Activated CD4-positive, alpha-beta T cell treated with anti-CD3 and anti-CD28 coated beads for 36 hours (primary cell): ENCODE measurements at regions of chr10 and their contacts with region 1.

Region 1: DNA sequence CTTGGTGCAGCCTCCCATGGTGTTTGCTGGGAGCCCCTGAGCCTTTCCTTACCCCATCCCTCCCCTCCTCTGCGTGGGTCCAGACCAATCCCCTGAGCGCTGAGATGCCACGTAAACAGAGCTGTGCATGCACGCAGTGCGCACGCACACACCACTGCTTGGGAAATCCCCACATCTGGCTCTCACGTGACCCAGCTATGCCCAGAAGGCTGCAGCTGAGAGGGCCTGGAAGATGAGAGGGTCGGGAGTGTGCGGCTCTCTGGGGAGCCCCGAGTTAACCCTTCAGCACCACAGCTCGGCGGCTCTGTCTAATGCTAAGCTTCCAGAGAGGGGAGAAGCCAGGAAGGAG is 177.2 kb downstream of the SH3PXD2A start:
- DNase-seq: peak; percentile 91
- ATAC-seq: peak; percentile 99
- H3K4me3 Mint-ChIP-seq: peak overlapping the region; percentile 72
- H3K27ac Mint-ChIP-seq: peak overlapping the region; percentile 90
- H3K4me1 Mint-ChIP-seq: peaks cover 20% of the 10 kb centered on the region
- H3K27me3 Mint-ChIP-seq: no peaks in the 10 kb centered on the region

Region 2: DNA sequence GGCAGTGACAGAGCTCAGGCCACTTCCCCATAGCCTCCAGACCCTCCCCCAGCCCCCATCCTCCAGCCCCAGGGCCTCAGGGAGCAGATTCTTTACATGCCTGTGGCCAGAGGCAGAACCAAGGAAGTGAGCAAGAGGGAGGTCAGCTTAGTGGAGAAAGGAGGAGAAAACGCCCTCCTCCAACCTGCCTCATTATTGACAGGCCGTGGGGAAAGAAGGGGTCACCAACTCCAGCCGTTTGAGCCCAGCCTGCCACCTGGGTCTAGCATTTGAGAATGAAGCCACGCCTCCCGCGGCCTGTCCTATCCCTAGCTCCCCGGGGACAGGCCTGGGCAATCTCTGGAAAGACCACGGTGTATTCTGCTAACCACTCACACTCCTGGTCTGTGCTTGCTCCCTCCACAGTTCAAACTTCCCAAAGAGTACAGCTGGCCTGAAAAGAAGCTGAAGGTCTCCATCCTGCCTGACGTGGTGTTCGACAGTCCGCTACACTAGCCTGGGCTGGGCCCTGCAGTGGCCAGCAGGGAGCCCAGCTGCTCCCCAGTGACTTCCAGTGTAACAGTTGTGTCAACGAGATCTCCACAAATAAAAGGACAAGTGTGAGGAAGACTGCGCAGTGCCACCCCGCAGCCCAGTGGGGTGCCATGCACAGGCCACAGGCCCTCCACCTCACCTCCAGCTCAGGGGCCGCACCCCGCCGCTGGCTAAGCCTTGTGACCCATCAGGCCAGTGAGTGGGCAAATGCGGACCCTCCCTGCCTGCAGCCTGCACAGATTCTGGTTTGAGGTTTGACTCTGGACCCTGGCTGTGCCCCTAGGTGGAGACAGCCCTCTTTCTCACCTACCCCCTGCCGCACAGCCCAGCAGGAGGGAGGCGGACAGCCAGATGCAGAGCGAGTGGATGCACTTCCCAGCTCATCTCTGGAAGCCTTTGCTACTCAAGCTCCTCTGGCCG is 1048.2 kb before region 1 on chr10:
- CTCF ChIA-PET with region 1: no interaction called
- POLR2A ChIA-PET with region 1: no interaction called
- intact Hi-C with region 1: loop called in 1 of 2 experiments (anchors 5 kb)
- DNase-seq: no peak
- ATAC-seq: no peak
- H3K4me3 Mint-ChIP-seq: no peak overlapping the region
- H3K27ac Mint-ChIP-seq: no peak overlapping the region
- H3K4me1 Mint-ChIP-seq: peaks cover 37% of the 10 kb centered on the region
- H3K27me3 Mint-ChIP-seq: no peaks in the 10 kb centered on the region

Region 3: GRCh38 chr10:103491493-103492381 is 186.4 kb before region 1 on chr10:
- CTCF ChIA-PET with region 1: no interaction called
- POLR2A ChIA-PET with region 1: no interaction called
- intact Hi-C with region 1: loop called in 1 of 2 experiments (anchors 2 kb)
- DNase-seq: no peak
- ATAC-seq: no peak
- H3K4me3 Mint-ChIP-seq: no peak overlapping the region
- H3K27ac Mint-ChIP-seq: peak overlapping the region; percentile 16
- H3K4me1 Mint-ChIP-seq: peaks cover 25% of the 10 kb centered on the region
- H3K27me3 Mint-ChIP-seq: peaks cover 32% of the 10 kb centered on the region

Region 4: GRCh38 chr10:103659674-103660363 is 18.3 kb before region 1 on chr10:
- CTCF ChIA-PET with region 1: interaction called, 3 read pairs
- POLR2A ChIA-PET with region 1: no interaction called
- intact Hi-C with region 1: loop called in 1 of 2 experiments (anchors 1 kb)
- DNase-seq: peak; percentile 74
- ATAC-seq: peak; percentile 94
- H3K4me3 Mint-ChIP-seq: peak overlapping the region; percentile 83
- H3K27ac Mint-ChIP-seq: peak overlapping the region; percentile 87
- H3K4me1 Mint-ChIP-seq: peaks cover 5% of the 10 kb centered on the region
- H3K27me3 Mint-ChIP-seq: no peaks in the 10 kb centered on the region

Region 5: GRCh38 chr10:103696411-103697145 is 18.4 kb after region 1 on chr10:
- CTCF ChIA-PET with region 1: interaction called, 7 read pairs
- POLR2A ChIA-PET with region 1: no interaction called
- intact Hi-C with region 1: loop called in 1 of 2 experiments (anchors 1 kb)
- DNase-seq: peak; percentile 90
- ATAC-seq: peak; percentile 94
- H3K4me3 Mint-ChIP-seq: peak overlapping the region; percentile 33
- H3K27ac Mint-ChIP-seq: peak overlapping the region; percentile 71
- H3K4me1 Mint-ChIP-seq: peaks cover 31% of the 10 kb centered on the region
- H3K27me3 Mint-ChIP-seq: peaks cover 2% of the 10 kb centered on the region